Sigmoid colon (tissue), 7 donors: ENCODE measurements at regions of chr7 and their contacts with region 1.

Region 1: GRCh38 chr7:99631295-99632109 is 14.8 kb downstream of the ZSCAN25 start:
- DNase-seq: no peak
- H3K4me3 ChIP-seq: no peak overlapping the region
- H3K27ac ChIP-seq: no peak overlapping the region
- H3K4me1 ChIP-seq: no peaks in the 10 kb centered on the region
- H3K27me3 ChIP-seq: no peaks in the 10 kb centered on the region
- CTCF ChIP-seq: no peak
- EP300 ChIP-seq: no peak
- POLR2A ChIP-seq: no peak

Region 2: GRCh38 chr7:99837649-99838361 is 206.3 kb after region 1 on chr7:
- intact Hi-C with region 1: loop called (anchors 5 kb)
- DNase-seq: no peak
- H3K4me3 ChIP-seq: no peak overlapping the region
- H3K27ac ChIP-seq: no peak overlapping the region
- H3K4me1 ChIP-seq: no peaks in the 10 kb centered on the region
- H3K27me3 ChIP-seq: no peaks in the 10 kb centered on the region
- CTCF ChIP-seq: peak in 2 of 4 experiments; percentile 12 to 21
- EP300 ChIP-seq: no peak
- POLR2A ChIP-seq: no peak